ENCODE measurements at regions of chr1 and their contacts with region 1.

Region 1: GRCh38 chr1:91148641-91149069 is 126.8 kb upstream of the ZNF644 start:
- DNase-seq: no peak
- H3K4me3 Mint-ChIP-seq: no peak overlapping the region
- H3K27ac Mint-ChIP-seq: no peak overlapping the region
- H3K4me1 Mint-ChIP-seq: no peaks in the 10 kb centered on the region
- H3K27me3 Mint-ChIP-seq: peaks cover 6% of the 10 kb centered on the region

Region 2: GRCh38 chr1:91830242-91831131 is 681.8 kb after region 1 on chr1:
- intact Hi-C with region 1: loop called (anchors 10 kb)
- DNase-seq: no peak
- H3K4me3 Mint-ChIP-seq: no peak overlapping the region
- H3K27ac Mint-ChIP-seq: no peak overlapping the region
- H3K4me1 Mint-ChIP-seq: peaks cover 5% of the 10 kb centered on the region
- H3K27me3 Mint-ChIP-seq: no peaks in the 10 kb centered on the region

Measured in activated T-helper 1 cell treated with anti-CD3 and anti-CD28 coated beads, Interleukin-12 subunit alpha, Interleukin-12 subunit beta, Interleukin-2, Interleukin-4 antibody, amounts not matched to agents 30 ng/mL and 10 ng/mL and 1 ng/mL, durations not matched to agents 14 hours and 24 hours and 36 hours (primary cell).